Gastrocnemius medialis (tissue), 4 donors: ENCODE measurements at regions of chr11 and their contacts with region 1.

Region 1: DNA sequence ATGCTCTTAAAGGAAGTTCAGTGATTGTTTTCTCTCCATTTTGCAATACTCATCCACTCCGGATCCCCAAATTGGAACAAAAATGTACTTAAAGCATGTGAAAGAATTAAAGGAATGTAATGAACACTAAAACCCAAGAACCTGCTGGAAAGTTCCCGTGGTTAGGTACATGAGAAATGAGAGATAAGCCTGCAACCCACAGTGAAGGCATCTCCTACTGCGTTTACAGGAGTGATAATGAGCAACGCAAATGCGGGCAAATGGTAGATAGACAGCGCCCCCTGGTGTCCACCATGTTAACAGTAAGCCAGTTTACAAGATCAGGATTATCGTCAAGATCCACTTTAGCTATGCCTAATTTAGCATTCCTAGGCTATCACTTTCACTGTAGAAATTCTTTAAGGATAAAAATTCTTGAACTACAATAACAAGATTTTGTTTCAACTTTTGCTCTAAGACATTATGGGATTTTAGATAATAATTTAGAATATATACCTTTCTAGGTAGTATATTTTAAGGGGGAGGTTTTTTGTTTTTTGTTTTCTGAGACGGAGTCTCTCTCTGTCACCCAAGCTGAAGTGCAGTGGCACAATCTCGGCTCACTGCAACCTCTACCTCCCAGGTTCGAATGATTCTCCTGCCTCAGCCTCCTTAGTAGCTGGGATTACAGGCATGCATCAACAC is 29.9 kb downstream of the ALG9 start:
- DNase-seq: peak; percentile 70 to 86
- ATAC-seq: peak; percentile 83 to 85
- H3K4me3 ChIP-seq: no peak overlapping the region
- H3K27ac ChIP-seq: peak overlapping the region; percentile 39 to 81 (median 72)
- H3K4me1 ChIP-seq: peaks cover 32 to 39% of the 10 kb centered on the region in 2 donors
- H3K27me3 ChIP-seq: no peaks in the 10 kb centered on the region
- CTCF ChIP-seq: peak; percentile 83 to 93 (median 90)
- POLR2A ChIP-seq: no peak

Region 2: GRCh38 chr11:111565114-111565720 is 276.3 kb before region 1 on chr11:
- in situ Hi-C with region 1: loop called in 3 of 4 experiments (anchors 5 to 10 kb)
- intact Hi-C with region 1: loop called (anchors 1 kb)
- DNase-seq: peak; percentile 37 to 56
- ATAC-seq: peak; percentile 54 to 86
- H3K4me3 ChIP-seq: no peak overlapping the region
- H3K27ac ChIP-seq: no peak overlapping the region
- H3K4me1 ChIP-seq: peaks cover 0 to 3% of the 10 kb centered on the region in 2 donors
- H3K27me3 ChIP-seq: no peaks in the 10 kb centered on the region
- CTCF ChIP-seq: peak; percentile 78 to 92 (median 86)
- POLR2A ChIP-seq: no peak

Region 3: DNA sequence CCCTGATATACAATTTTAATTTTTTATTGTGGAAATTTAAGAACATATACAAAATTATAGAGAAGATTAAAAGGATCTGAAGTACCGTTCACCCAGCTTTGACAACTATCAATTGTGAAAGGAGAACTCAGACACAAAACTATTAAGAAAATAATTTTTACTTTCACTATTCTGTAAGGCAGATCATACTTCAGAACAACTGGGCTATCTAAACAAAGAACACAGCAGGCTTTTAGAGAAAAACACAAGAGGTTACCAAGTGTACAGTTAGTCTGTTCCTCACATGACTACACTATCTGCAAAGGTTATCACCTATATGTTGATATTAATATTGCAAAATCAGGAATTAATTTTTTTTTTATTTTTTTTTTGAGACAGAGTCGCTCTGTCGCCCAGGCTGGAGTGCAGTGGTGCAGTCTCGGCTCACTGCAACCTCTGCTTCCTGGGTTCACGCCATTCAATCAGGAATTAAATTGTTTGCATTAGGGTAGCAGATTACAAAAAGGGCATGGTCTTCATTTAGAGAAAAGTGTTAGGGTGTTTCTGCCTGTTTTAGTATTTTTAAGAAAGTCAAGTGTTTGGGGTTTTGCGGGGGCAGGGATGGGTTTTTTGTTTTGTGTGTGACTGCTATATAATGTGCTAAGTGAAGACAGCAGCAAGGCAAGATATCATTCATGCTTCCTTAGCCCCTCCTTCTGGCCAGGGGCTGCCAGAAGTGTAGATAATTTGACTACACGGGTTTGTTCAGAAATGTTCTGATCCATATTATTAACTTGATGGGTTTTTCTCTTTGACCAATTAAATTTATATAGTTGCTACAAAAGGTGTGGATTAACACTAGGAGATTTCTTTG is 266.9 kb before region 1 on chr11:
- in situ Hi-C with region 1: loop called in 3 of 4 experiments (anchors 5 to 10 kb)
- intact Hi-C with region 1: no loop called
- DNase-seq: no peak
- ATAC-seq: peak; percentile 25 to 43
- H3K4me3 ChIP-seq: peak overlapping the region; percentile 6 to 26 (median 16)
- H3K27ac ChIP-seq: peak overlapping the region; percentile 49 to 79 (median 68)
- H3K4me1 ChIP-seq: peaks cover 17 to 21% of the 10 kb centered on the region in 2 donors
- H3K27me3 ChIP-seq: no peaks in the 10 kb centered on the region
- CTCF ChIP-seq: no peak
- POLR2A ChIP-seq: no peak

Region 4: DNA sequence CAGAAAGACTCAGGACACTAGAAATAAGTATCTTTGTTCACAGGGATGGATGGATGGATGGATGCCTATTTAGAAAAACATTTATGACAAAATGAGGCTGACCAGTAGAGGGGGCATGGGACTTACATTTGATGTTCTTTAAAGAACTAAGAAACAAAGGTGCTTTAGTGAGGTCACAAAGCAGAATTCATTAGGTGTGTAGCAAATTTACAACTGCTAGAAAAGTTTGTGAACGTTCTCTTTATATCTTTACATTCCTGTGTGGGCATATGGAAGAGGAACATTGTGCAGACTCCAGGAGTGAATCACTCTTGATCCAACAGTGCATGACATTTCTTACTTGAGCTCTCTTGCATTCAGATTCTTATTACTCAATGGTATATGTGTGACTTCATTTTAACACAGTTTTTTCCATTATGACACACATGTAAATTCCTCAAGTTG is 255.1 kb before region 1 on chr11:
- in situ Hi-C with region 1: loop called in 1 of 4 experiments (anchors 5 kb)
- intact Hi-C with region 1: no loop called
- DNase-seq: no peak
- ATAC-seq: peak in 1 of 2 donors; percentile 36
- H3K4me3 ChIP-seq: no peak overlapping the region
- H3K27ac ChIP-seq: no peak overlapping the region
- H3K4me1 ChIP-seq: no peaks in the 10 kb centered on the region
- H3K27me3 ChIP-seq: no peaks in the 10 kb centered on the region
- CTCF ChIP-seq: peak; percentile 38 to 58 (median 56)
- POLR2A ChIP-seq: no peak

Region 5: DNA sequence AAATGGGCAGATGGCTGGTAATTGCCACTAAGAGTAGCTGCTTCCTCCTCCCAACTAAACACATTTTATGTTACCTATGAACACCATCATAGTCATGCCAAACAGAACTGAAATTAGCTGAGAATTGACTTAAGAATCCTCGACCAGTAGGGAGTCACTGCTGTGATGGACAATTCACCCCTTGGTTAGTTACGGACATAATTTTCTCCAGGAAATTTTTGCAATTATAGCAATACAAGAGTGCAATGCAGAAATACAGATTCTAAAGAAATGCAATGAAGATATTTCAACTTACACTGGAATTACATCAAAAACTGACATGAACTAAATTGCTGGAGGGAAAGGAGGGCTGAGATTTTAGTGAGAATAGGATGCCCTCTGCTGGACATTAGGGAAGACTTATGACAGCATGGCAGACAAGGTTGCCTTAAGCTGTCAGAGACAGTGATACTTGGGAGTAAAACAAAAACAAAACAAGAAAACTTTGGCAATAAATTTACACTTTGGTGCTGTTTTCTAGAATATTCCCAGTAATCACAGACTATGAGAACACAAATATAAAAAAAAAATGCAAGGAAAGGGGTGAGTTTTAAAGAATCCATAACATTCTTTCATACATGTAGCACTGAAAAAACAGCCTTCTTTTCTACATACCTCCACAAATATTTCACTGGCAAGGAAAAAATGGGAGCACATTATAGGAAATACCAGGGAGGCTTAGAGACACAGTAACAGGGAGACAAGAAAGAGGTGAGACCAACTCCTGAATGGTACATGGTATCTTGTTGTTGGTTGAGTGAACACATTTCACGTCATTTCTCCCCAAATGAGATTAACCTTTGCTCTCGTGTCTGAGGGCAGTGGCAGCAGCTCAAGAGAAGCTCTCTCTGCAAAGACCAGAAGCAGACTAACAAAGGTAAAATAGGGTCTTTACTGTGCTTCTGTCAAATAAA is 64.1 kb before region 1 on chr11:
- in situ Hi-C with region 1: loop called in 2 of 4 experiments (anchors 5 to 10 kb)
- intact Hi-C with region 1: loop called (anchors 2 kb)
- DNase-seq: no peak
- ATAC-seq: peak; percentile 90 to 94
- H3K4me3 ChIP-seq: no peak overlapping the region
- H3K27ac ChIP-seq: peak overlapping the region in 1 of 4 donors; percentile 6
- H3K4me1 ChIP-seq: peaks cover 0 to 7% of the 10 kb centered on the region in 2 donors
- H3K27me3 ChIP-seq: no peaks in the 10 kb centered on the region
- CTCF ChIP-seq: peak; percentile 70 to 81 (median 78)
- POLR2A ChIP-seq: no peak

Region 6: GRCh38 chr11:111788051-111788450 is 53.5 kb before region 1 on chr11:
- in situ Hi-C with region 1: loop called in 1 of 4 experiments (anchors 10 kb)
- intact Hi-C with region 1: loop called (anchors 5 kb)
- DNase-seq: peak; percentile 64 to 77
- ATAC-seq: peak; percentile 90 to 92
- H3K4me3 ChIP-seq: no peak overlapping the region
- H3K27ac ChIP-seq: peak overlapping the region; percentile 78 to 88 (median 84)
- H3K4me1 ChIP-seq: peaks cover 28 to 42% of the 10 kb centered on the region in 2 donors
- H3K27me3 ChIP-seq: no peaks in the 10 kb centered on the region
- CTCF ChIP-seq: no peak
- POLR2A ChIP-seq: no peak